GM13976 (cell line): ENCODE measurements at regions of chr3 and their contacts with region 1.

Region 1: DNA sequence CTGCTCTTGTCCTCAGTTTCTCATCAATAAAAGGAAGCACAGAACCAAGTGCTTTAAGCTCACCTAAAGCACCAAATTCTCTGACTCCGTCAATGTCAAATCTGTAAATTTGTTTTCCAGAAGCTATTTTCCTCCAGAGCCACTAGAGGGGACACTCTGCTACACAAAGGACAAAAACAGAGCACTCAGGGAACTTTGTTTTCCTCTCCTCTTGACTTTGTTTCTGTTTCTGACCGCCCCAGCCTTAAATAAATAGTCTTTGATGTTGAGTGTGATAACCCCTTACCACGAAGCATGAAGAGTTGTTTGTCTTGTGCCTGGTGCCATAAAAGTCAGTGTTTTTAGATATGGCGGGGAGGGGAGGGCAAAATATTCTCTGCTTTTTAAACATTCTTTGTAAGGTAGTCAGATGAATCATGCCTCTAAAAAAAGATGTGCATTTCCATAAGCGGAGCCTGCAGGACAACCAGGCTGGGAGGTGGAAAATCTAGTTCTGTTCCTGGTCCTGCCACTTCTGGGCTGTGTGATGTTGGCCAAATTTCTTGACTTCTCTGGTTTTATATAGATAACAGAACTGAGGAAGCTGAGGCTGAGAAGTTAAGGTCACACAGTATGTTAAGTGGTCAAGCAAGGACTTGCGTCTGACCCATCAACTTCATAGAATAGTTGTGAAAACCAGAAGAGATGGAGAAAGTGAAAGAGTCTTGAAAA is 7.3 kb upstream of the ZBTB38 start:
- DNase-seq: peak; percentile 71
- CTCF ChIP-seq: peak; percentile 56

Region 2: DNA sequence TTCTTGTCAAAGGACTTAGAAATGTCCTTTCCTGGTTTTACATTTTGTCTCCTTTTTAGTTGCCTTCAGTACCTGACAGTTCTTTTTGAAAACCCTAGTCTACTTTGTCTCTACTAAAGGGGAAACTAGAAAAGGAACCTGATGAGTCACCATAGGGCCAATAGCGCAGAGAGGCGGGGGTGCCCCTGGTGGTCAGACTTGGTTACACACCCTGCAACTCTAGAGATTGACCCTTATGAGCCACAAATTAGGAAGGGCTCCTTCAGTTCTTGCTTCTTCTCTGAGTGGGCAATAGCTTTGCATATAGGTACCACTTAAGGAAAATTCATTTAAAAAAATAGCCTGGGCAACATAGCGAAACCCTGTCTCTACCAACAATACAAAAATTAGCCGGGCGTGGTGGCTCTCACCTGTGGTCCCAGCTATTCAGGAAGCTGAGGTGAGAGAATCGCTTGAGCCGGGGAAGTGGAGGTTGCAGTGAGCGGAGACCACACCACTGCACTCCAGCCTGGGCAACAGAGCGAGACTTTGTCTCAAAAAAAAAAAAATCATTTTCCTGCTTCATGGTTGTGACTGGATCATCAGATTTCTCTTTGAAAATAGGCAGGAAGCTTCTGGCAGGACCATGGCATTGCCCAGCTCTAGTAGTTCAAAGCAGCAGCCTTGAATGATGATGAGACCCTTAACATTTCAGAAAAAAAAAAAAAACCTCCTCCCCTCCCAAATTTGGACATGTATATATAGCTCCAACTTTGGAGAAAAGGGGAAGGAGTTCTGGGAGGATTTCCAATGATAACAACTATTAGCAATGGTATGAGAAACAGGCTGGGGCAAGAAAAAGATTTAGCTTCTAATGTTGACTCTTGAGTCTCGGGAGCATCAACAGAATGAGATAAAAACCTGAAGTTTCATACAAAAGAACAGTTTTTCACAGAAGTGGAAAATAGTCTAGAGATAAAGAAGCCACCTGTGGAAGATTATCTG is 80.6 kb after region 1 on chr3:
- in situ Hi-C with region 1: loop called (anchors 10 kb)
- DNase-seq: peak; percentile 78
- CTCF ChIP-seq: peak; percentile 65